Endothelial cell of umbilical vein (primary cell): ENCODE measurements at regions of chr4 and their contacts with region 1.

Region 1: GRCh38 chr4:133148690-133149363 is at the start of gene PCDH10:
- DNase-seq: peak; percentile 98
- H3K4me3 ChIP-seq: peak within 1 kb of the TSS; percentile 72 to 90 (median 77)
- H3K27ac ChIP-seq: peak within 1 kb of the TSS; percentile 67
- H3K4me1 ChIP-seq: peaks cover 33% of the 10 kb centered on the region
- H3K27me3 ChIP-seq: no peaks in the 10 kb centered on the region
- CTCF ChIP-seq: no peak
- POLR2A ChIP-seq: peak; percentile 96
- total RNA-seq, gene PCDH10: 56.5 and 91.7 TPM in 2 replicates

Region 2: DNA sequence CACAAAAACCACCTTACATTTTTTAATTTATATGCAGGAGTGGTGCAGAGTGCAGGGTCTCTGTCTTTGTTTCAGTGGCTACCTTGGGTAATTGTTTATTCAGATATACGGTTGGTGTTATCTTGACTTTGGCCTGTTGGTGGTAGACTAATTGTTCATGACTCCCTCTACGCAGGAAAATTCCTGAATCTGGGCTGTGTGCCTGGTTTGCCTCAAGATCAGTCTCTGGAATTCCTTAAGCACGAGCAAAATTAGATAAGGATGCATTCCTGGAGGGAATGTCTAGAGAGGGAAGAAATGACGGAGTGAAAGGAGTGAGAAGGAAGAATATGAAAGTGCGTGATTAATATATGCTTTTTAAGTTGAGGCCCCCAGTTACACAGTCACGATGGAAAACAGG is 576.6 kb before region 1 on chr4:
- CTCF ChIA-PET with region 1: no interaction called
- POLR2A ChIA-PET with region 1: no interaction called
- dilution Hi-C with region 1: no loop called
- intact Hi-C with region 1: loop called (anchors 10 kb)
- DNase-seq: peak; percentile 33
- H3K4me3 ChIP-seq: no peak overlapping the region
- H3K27ac ChIP-seq: no peak overlapping the region
- H3K4me1 ChIP-seq: no peaks in the 10 kb centered on the region
- H3K27me3 ChIP-seq: no peaks in the 10 kb centered on the region
- CTCF ChIP-seq: no peak
- POLR2A ChIP-seq: no peak

Region 3: GRCh38 chr4:132893787-132894186 is 255.0 kb before region 1 on chr4:
- CTCF ChIA-PET with region 1: interaction called, 11 read pairs
- POLR2A ChIA-PET with region 1: no interaction called
- dilution Hi-C with region 1: no loop called
- intact Hi-C with region 1: no loop called
- DNase-seq: peak; percentile 93
- H3K4me3 ChIP-seq: no peak overlapping the region
- H3K27ac ChIP-seq: no peak overlapping the region
- H3K4me1 ChIP-seq: no peaks in the 10 kb centered on the region
- H3K27me3 ChIP-seq: no peaks in the 10 kb centered on the region
- CTCF ChIP-seq: no peak
- POLR2A ChIP-seq: no peak

Region 4: GRCh38 chr4:132934946-132935345 is 213.9 kb before region 1 on chr4:
- CTCF ChIA-PET with region 1: no interaction called
- POLR2A ChIA-PET with region 1: no interaction called
- dilution Hi-C with region 1: no loop called
- intact Hi-C with region 1: no loop called
- DNase-seq: no peak
- H3K4me3 ChIP-seq: no peak overlapping the region
- H3K27ac ChIP-seq: no peak overlapping the region
- H3K4me1 ChIP-seq: no peaks in the 10 kb centered on the region
- H3K27me3 ChIP-seq: no peaks in the 10 kb centered on the region
- CTCF ChIP-seq: no peak
- POLR2A ChIP-seq: no peak

Region 5: DNA sequence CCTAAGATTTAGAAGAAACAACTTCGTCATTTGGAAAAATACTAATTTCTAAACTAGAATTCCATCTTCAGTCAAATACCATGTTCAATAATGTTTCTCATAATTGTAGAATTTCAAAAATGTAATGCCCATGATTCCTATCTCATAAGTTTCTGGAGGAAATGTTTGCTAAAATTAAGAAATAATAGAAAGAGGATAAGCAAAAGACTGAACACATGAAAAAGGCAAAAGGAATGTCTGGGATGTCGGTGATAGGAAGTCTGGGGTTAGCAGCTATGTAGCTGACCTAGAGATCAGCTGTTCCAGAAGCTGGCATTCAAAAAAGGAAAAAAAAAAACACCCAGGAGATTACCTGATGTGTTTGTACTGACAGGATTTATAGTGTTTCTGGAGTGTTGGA is 18.7 kb before region 1 on chr4:
- CTCF ChIA-PET with region 1: interaction called, 23 read pairs
- POLR2A ChIA-PET with region 1: interaction called, 6 read pairs
- dilution Hi-C with region 1: no loop called
- intact Hi-C with region 1: loop called (anchors 1 kb)
- DNase-seq: peak; percentile 80
- H3K4me3 ChIP-seq: no peak overlapping the region
- H3K27ac ChIP-seq: peak overlapping the region; percentile 50
- H3K4me1 ChIP-seq: peaks cover 17% of the 10 kb centered on the region
- H3K27me3 ChIP-seq: no peaks in the 10 kb centered on the region
- CTCF ChIP-seq: no peak
- POLR2A ChIP-seq: no peak

Region 6: GRCh38 chr4:133483600-133484246 is 334.9 kb after region 1 on chr4:
- CTCF ChIA-PET with region 1: interaction called, 43 read pairs
- POLR2A ChIA-PET with region 1: interaction called, 3 read pairs
- dilution Hi-C with region 1: no loop called
- intact Hi-C with region 1: loop called (anchors 1 kb)
- DNase-seq: peak; percentile 55
- H3K4me3 ChIP-seq: no peak overlapping the region
- H3K27ac ChIP-seq: no peak overlapping the region
- H3K4me1 ChIP-seq: no peaks in the 10 kb centered on the region
- H3K27me3 ChIP-seq: no peaks in the 10 kb centered on the region
- CTCF ChIP-seq: peak; percentile 20 to 42
- POLR2A ChIP-seq: no peak

Region 7: GRCh38 chr4:133559987-133560386 is 411.2 kb after region 1 on chr4:
- CTCF ChIA-PET with region 1: no interaction called
- POLR2A ChIA-PET with region 1: no interaction called
- dilution Hi-C with region 1: no loop called
- intact Hi-C with region 1: no loop called
- DNase-seq: no peak
- H3K4me3 ChIP-seq: no peak overlapping the region
- H3K27ac ChIP-seq: no peak overlapping the region
- H3K4me1 ChIP-seq: no peaks in the 10 kb centered on the region
- H3K27me3 ChIP-seq: no peaks in the 10 kb centered on the region
- CTCF ChIP-seq: no peak
- POLR2A ChIP-seq: no peak

Region 8: GRCh38 chr4:134585972-134586371 is 1437.1 kb after region 1 on chr4:
- CTCF ChIA-PET with region 1: no interaction called
- POLR2A ChIA-PET with region 1: no interaction called
- dilution Hi-C with region 1: no loop called
- intact Hi-C with region 1: loop called (anchors 5 kb)
- DNase-seq: peak; percentile 97
- H3K4me3 ChIP-seq: no peak overlapping the region
- H3K27ac ChIP-seq: peak overlapping the region; percentile 86
- H3K4me1 ChIP-seq: peaks cover 17% of the 10 kb centered on the region
- H3K27me3 ChIP-seq: no peaks in the 10 kb centered on the region
- CTCF ChIP-seq: no peak
- POLR2A ChIP-seq: peak; percentile 79

Region 9: DNA sequence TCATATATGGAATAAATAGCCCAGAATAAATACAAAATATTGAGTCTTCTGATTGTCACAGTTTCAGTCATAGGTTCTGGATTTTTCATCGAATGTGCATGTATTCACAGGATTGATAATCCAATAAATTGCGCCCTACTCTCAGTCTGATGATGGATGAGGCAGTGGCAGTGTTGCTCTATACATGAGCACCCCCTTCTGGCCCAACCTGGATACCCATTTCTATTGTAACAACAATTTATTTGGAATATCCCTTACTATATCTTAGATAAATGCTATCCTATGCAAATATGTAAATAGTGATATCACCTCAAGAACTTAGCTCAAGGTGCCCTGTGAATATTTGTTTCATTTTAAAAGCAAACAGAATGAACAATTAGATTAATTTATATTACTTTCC is 1786.5 kb after region 1 on chr4:
- CTCF ChIA-PET with region 1: interaction called, 13 read pairs
- POLR2A ChIA-PET with region 1: no interaction called
- dilution Hi-C with region 1: no loop called
- intact Hi-C with region 1: loop called (anchors 1 kb)
- DNase-seq: peak; percentile 49
- H3K4me3 ChIP-seq: no peak overlapping the region
- H3K27ac ChIP-seq: no peak overlapping the region
- H3K4me1 ChIP-seq: no peaks in the 10 kb centered on the region
- H3K27me3 ChIP-seq: no peaks in the 10 kb centered on the region
- CTCF ChIP-seq: peak in 1 of 2 donors; percentile 47
- POLR2A ChIP-seq: no peak